Gastrocnemius medialis (tissue), 4 donors: ENCODE measurements at regions of chr13 and their contacts with region 1.

Region 1: DNA sequence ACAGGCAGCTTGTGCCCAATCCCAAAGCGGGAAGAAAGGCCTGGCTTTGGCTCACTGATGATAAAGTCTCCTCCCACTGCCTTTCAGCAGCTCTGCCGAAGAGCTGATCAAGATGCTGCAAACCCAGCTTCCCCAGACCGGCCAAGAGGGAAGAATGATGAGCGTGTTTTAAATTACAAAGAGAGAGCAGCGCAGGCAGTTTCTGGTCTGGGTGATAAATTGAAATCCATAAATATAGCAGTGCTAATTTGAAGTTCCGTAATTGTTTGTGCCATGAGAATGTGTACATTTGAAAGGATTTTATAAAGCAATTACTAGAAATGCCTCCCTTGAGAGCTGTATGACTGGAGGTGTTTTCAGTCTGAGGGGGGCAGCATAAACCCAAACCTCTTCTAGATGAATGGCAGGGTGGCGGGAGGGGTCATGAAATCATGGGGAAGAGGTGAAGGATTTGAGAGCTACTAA is 171.8 kb downstream of the STK24 start:
- DNase-seq: no peak
- ATAC-seq: no peak
- H3K4me3 ChIP-seq: no peak overlapping the region
- H3K27ac ChIP-seq: no peak overlapping the region
- H3K4me1 ChIP-seq: no peaks in the 10 kb centered on the region
- H3K27me3 ChIP-seq: no peaks in the 10 kb centered on the region
- CTCF ChIP-seq: no peak
- POLR2A ChIP-seq: no peak

Region 2: DNA sequence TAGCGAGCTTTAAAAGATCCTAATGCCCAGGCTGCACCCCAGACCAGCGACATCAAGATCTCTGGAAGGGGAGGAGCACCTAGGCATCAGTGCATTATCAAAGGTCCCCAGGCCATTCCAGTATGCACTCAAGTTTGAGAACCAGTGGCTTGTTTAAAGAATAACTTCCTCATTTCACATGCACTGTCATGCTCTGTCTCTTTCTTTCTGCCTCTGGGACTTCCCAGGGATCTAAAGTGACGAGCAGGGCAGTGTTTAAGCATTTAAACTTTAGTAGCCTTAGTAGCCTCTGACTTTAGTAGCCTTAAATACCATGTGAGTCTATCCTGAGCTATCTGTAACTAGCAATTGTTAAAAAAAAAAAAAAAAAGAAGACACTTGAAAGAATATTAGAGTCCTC is 271.2 kb before region 1 on chr13:
- in situ Hi-C with region 1: no loop called
- intact Hi-C with region 1: loop called (anchors 10 kb)
- DNase-seq: no peak
- ATAC-seq: no peak
- H3K4me3 ChIP-seq: no peak overlapping the region
- H3K27ac ChIP-seq: no peak overlapping the region
- H3K4me1 ChIP-seq: no peaks in the 10 kb centered on the region
- H3K27me3 ChIP-seq: no peaks in the 10 kb centered on the region
- CTCF ChIP-seq: no peak
- POLR2A ChIP-seq: no peak